ENCODE measurements at regions of chr12 and their contacts with region 1.

Region 1: GRCh38 chr12:6662906-6663742 is at the start of gene ING4:
- DNase-seq: peak; percentile 79 to 99 (median 98)
- ATAC-seq: peak; percentile 99
- H3K4me3 ChIP-seq: peak within 1 kb of the TSS; percentile 92
- H3K4me3 Mint-ChIP-seq: peak within 1 kb of the TSS; percentile 92 to 99 (median 96)
- H3K27ac ChIP-seq: peak within 1 kb of the TSS; percentile 80
- H3K27ac Mint-ChIP-seq: peak within 1 kb of the TSS; percentile 91 to 99 (median 96)
- H3K4me1 ChIP-seq: peaks cover 15 to 16% of the 10 kb centered on the region in 2 donors
- H3K4me1 Mint-ChIP-seq: peaks cover 18 to 47% (median 36%) of the 10 kb centered on the region in 7 donors
- H3K27me3 ChIP-seq: no peaks in the 10 kb centered on the region
- H3K27me3 Mint-ChIP-seq: peaks cover 0 to 2% (median 0%) of the 10 kb centered on the region in 5 donors
- total RNA-seq, gene ING4: 33.1 to 101 (median 39.6) TPM

Region 2: GRCh38 chr12:6461401-6462233 is 201.5 kb before region 1 on chr12:
- CTCF ChIA-PET with region 1: no interaction called
- POLR2A ChIA-PET with region 1: no interaction called
- intact Hi-C with region 1: loop called in 1 of 2 experiments (anchors 1 kb)
- DNase-seq: peak; percentile 41 to 91 (median 87)
- ATAC-seq: peak; percentile 93
- H3K4me3 ChIP-seq: peak overlapping the region; percentile 54
- H3K4me3 Mint-ChIP-seq: peak overlapping the region; percentile 74 to 89 (median 85)
- H3K27ac ChIP-seq: peak overlapping the region; percentile 93
- H3K27ac Mint-ChIP-seq: peak overlapping the region; percentile 95 to 99 (median 98)
- H3K4me1 ChIP-seq: peaks cover 59 to 81% of the 10 kb centered on the region in 2 donors
- H3K4me1 Mint-ChIP-seq: peaks cover 66 to 95% (median 87%) of the 10 kb centered on the region in 7 donors
- H3K27me3 ChIP-seq: no peaks in the 10 kb centered on the region
- H3K27me3 Mint-ChIP-seq: no peaks in the 10 kb centered on the region

Region 3: GRCh38 chr12:6554168-6555017 is 108.7 kb before region 1 on chr12:
- CTCF ChIA-PET with region 1: no interaction called
- POLR2A ChIA-PET with region 1: no interaction called
- intact Hi-C with region 1: loop called in 1 of 2 experiments (anchors 1 kb)
- DNase-seq: peak; percentile 38 to 57 (median 52)
- ATAC-seq: peak; percentile 67
- H3K4me3 ChIP-seq: peak overlapping the region; percentile 92
- H3K4me3 Mint-ChIP-seq: peak overlapping the region; percentile 80 to 96 (median 90)
- H3K27ac ChIP-seq: peak overlapping the region; percentile 71
- H3K27ac Mint-ChIP-seq: peak overlapping the region; percentile 14 to 88 (median 55)
- H3K4me1 ChIP-seq: peaks cover 26 to 29% of the 10 kb centered on the region in 2 donors
- H3K4me1 Mint-ChIP-seq: peaks cover 39 to 62% (median 56%) of the 10 kb centered on the region in 7 donors
- H3K27me3 ChIP-seq: no peaks in the 10 kb centered on the region
- H3K27me3 Mint-ChIP-seq: no peaks in the 10 kb centered on the region

Region 4: GRCh38 chr12:6607751-6608591 is 55.2 kb before region 1 on chr12:
- CTCF ChIA-PET with region 1: interaction called, 4 read pairs
- POLR2A ChIA-PET with region 1: interaction called, 5 read pairs
- intact Hi-C with region 1: loop called (anchors 1 kb)
- DNase-seq: peak in 8 of 9 donors; percentile 56 to 81 (median 71)
- ATAC-seq: peak; percentile 49
- H3K4me3 ChIP-seq: no peak overlapping the region
- H3K4me3 Mint-ChIP-seq: no peak overlapping the region
- H3K27ac ChIP-seq: peak overlapping the region; percentile 96
- H3K27ac Mint-ChIP-seq: no peak overlapping the region
- H3K4me1 ChIP-seq: peaks cover 46 to 47% of the 10 kb centered on the region in 2 donors
- H3K4me1 Mint-ChIP-seq: peaks cover 48 to 55% (median 51%) of the 10 kb centered on the region in 7 donors
- H3K27me3 ChIP-seq: no peaks in the 10 kb centered on the region
- H3K27me3 Mint-ChIP-seq: no peaks in the 10 kb centered on the region

Region 5: GRCh38 chr12:6632026-6632983 is 30.8 kb before region 1 on chr12:
- CTCF ChIA-PET with region 1: interaction called, 6 read pairs
- POLR2A ChIA-PET with region 1: interaction called, 5 read pairs
- intact Hi-C with region 1: loop called (anchors 1 to 2 kb)
- DNase-seq: peak in 8 of 9 donors; percentile 43 to 75 (median 66)
- ATAC-seq: peak; percentile 81
- H3K4me3 ChIP-seq: peak overlapping the region; percentile 56
- H3K4me3 Mint-ChIP-seq: peak overlapping the region; percentile 80 to 94 (median 88)
- H3K27ac ChIP-seq: peak overlapping the region; percentile 81
- H3K27ac Mint-ChIP-seq: peak overlapping the region; percentile 94 to 99 (median 97)
- H3K4me1 ChIP-seq: peaks cover 26 to 40% of the 10 kb centered on the region in 2 donors
- H3K4me1 Mint-ChIP-seq: peaks cover 46 to 68% (median 58%) of the 10 kb centered on the region in 7 donors
- H3K27me3 ChIP-seq: no peaks in the 10 kb centered on the region
- H3K27me3 Mint-ChIP-seq: no peaks in the 10 kb centered on the region

Region 6: GRCh38 chr12:6890789-6891645 is 227.9 kb after region 1 on chr12:
- CTCF ChIA-PET with region 1: no interaction called
- POLR2A ChIA-PET with region 1: no interaction called
- intact Hi-C with region 1: loop called in 1 of 2 experiments (anchors 1 kb)
- DNase-seq: peak; percentile 95 to 100 (median 97)
- ATAC-seq: peak; percentile 96
- H3K4me3 ChIP-seq: peak overlapping the region; percentile 93
- H3K4me3 Mint-ChIP-seq: peak overlapping the region; percentile 78 to 86 (median 84)
- H3K27ac ChIP-seq: peak overlapping the region; percentile 86
- H3K27ac Mint-ChIP-seq: peak overlapping the region; percentile 82 to 94 (median 90)
- H3K4me1 ChIP-seq: peaks cover 6 to 10% of the 10 kb centered on the region in 2 donors
- H3K4me1 Mint-ChIP-seq: peaks cover 0 to 31% (median 11%) of the 10 kb centered on the region in 7 donors
- H3K27me3 ChIP-seq: no peaks in the 10 kb centered on the region
- H3K27me3 Mint-ChIP-seq: no peaks in the 10 kb centered on the region

Region 7: DNA sequence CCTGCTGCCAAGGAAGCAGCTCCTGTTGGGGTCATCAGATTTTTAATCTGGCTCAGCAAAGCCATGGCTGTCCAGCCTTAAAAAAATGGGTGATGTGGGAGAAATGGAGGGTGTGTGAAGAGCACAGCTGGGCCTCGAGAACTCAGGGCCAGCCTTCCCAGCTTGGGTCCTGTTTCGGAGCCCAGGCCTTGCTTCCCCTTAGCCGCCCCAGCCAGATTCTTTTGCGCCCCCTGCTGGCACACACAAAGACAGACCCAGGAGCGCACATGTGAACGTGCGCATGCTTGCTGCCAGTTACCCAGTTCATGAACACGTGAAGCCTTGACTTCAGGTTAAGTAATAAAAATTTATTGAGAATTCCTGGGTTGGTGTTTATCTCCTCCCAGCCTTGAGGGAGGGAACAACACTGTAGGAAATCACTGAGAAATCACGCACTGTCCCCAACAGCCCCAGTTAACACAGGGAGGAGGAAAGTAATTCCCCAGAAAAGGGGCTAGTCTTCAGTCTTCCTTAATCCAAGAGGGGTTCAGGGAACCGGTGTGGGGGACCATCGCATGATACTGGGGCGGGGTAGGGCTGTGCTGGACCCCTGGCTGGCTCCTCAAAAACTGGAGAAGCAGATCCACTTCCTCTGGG is 302.0 kb after region 1 on chr12:
- CTCF ChIA-PET with region 1: no interaction called
- POLR2A ChIA-PET with region 1: no interaction called
- intact Hi-C with region 1: loop called in 1 of 2 experiments (anchors 1 kb)
- DNase-seq: peak; percentile 77 to 89 (median 85)
- ATAC-seq: peak; percentile 69
- H3K4me3 ChIP-seq: no peak overlapping the region
- H3K4me3 Mint-ChIP-seq: peak overlapping the region in 3 of 10 donors; percentile 9 to 23 (median 17)
- H3K27ac ChIP-seq: peak overlapping the region; percentile 68
- H3K27ac Mint-ChIP-seq: peak overlapping the region; percentile 75 to 95 (median 87)
- H3K4me1 ChIP-seq: peaks cover 45 to 60% of the 10 kb centered on the region in 2 donors
- H3K4me1 Mint-ChIP-seq: peaks cover 33 to 59% (median 56%) of the 10 kb centered on the region in 7 donors
- H3K27me3 ChIP-seq: no peaks in the 10 kb centered on the region
- H3K27me3 Mint-ChIP-seq: no peaks in the 10 kb centered on the region